Activated CD4-positive, alpha-beta T cell treated with anti-CD3 and anti-CD28 coated beads for 36 hours (primary cell): ENCODE measurements at regions of chr7 and their contacts with region 1.

Region 1: GRCh38 chr7:142711746-142712619 is 37.3 kb upstream of the PRSS1 start:
- DNase-seq: peak; percentile 48
- ATAC-seq: peak; percentile 86
- H3K4me3 Mint-ChIP-seq: peak overlapping the region; percentile 67
- H3K27ac Mint-ChIP-seq: peak overlapping the region; percentile 85
- H3K4me1 Mint-ChIP-seq: peaks cover 65% of the 10 kb centered on the region
- H3K27me3 Mint-ChIP-seq: no peaks in the 10 kb centered on the region

Region 2: GRCh38 chr7:142646386-142647140 is 65.4 kb before region 1 on chr7:
- CTCF ChIA-PET with region 1: no interaction called
- POLR2A ChIA-PET with region 1: no interaction called
- intact Hi-C with region 1: no loop called
- DNase-seq: no peak
- ATAC-seq: peak; percentile 19
- H3K4me3 Mint-ChIP-seq: peak overlapping the region; percentile 64
- H3K27ac Mint-ChIP-seq: peak overlapping the region; percentile 74
- H3K4me1 Mint-ChIP-seq: peaks cover 12% of the 10 kb centered on the region
- H3K27me3 Mint-ChIP-seq: peaks cover 2% of the 10 kb centered on the region

Region 3: GRCh38 chr7:142669074-142669654 is 42.8 kb before region 1 on chr7:
- CTCF ChIA-PET with region 1: no interaction called
- POLR2A ChIA-PET with region 1: no interaction called
- intact Hi-C with region 1: loop called in 1 of 2 experiments (anchors 5 kb)
- DNase-seq: no peak
- ATAC-seq: peak; percentile 39
- H3K4me3 Mint-ChIP-seq: no peak overlapping the region
- H3K27ac Mint-ChIP-seq: peak overlapping the region; percentile 59
- H3K4me1 Mint-ChIP-seq: peaks cover 28% of the 10 kb centered on the region
- H3K27me3 Mint-ChIP-seq: no peaks in the 10 kb centered on the region

Region 4: DNA sequence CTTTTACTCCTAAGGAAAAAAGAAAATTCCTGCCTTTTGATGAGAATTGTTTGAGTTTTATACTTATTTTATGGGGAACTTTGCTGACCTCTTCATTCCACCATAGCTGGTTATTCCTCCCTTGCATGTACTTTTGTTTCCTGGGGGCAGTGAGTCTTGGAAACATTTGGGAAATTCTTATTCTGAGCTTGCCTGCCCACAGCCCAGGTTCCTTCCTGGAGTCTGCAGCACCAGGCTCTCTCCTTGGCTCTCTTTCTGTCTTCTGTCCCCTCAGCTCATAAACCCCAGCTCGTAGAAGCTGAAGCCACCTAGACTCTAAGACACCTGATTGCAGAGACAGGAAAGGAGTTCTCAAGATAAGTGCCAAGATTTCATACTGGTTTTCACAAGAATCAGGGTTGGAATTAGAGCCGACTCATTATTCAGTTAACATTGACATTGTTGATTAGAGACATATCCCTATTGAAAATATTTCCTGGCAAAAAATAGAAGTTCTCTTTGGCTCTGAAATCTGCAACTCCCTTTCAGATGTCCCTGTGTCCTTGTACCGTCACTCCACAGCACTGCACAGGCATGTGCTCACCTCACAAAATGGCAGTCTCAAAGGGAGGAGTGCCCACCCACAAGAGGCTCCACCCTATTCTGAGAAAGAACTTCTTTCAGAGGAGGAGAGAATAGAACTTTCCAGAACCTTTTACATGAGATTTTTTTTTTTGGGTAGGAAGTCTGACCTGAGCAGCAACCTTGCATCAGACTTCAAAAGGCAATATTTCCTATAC is 30.5 kb before region 1 on chr7:
- CTCF ChIA-PET with region 1: no interaction called
- POLR2A ChIA-PET with region 1: no interaction called
- intact Hi-C with region 1: no loop called
- DNase-seq: no peak
- ATAC-seq: no peak
- H3K4me3 Mint-ChIP-seq: no peak overlapping the region
- H3K27ac Mint-ChIP-seq: no peak overlapping the region
- H3K4me1 Mint-ChIP-seq: peaks cover 13% of the 10 kb centered on the region
- H3K27me3 Mint-ChIP-seq: no peaks in the 10 kb centered on the region

Region 5: DNA sequence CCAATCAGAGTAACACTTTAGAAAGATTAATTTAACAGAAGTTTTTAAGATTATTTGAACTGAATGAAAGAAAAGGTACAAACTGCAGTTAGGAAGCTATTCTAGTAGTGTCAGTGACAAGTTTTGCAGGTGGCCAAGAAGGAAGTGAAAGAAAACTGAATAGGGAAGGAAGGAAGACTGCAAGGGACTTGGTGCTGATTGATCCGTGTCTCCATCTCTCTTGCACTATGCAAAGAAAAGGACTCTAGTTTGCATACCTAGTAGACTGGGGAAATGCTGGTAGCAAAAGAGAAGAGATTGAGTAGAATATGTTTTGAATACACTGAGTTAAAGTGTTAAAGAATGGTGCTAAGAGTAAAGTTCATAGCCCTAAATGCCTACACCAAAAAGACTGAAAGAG is 373.1 kb after region 1 on chr7:
- CTCF ChIA-PET with region 1: no interaction called
- POLR2A ChIA-PET with region 1: no interaction called
- intact Hi-C with region 1: no loop called
- DNase-seq: no peak
- ATAC-seq: no peak
- H3K4me3 Mint-ChIP-seq: no peak overlapping the region
- H3K27ac Mint-ChIP-seq: no peak overlapping the region
- H3K4me1 Mint-ChIP-seq: no peaks in the 10 kb centered on the region
- H3K27me3 Mint-ChIP-seq: peaks cover 16% of the 10 kb centered on the region